Common myeloid progenitor, CD34-positive (primary cell): ENCODE measurements at regions of chr12 and their contacts with region 1.

Region 1: DNA sequence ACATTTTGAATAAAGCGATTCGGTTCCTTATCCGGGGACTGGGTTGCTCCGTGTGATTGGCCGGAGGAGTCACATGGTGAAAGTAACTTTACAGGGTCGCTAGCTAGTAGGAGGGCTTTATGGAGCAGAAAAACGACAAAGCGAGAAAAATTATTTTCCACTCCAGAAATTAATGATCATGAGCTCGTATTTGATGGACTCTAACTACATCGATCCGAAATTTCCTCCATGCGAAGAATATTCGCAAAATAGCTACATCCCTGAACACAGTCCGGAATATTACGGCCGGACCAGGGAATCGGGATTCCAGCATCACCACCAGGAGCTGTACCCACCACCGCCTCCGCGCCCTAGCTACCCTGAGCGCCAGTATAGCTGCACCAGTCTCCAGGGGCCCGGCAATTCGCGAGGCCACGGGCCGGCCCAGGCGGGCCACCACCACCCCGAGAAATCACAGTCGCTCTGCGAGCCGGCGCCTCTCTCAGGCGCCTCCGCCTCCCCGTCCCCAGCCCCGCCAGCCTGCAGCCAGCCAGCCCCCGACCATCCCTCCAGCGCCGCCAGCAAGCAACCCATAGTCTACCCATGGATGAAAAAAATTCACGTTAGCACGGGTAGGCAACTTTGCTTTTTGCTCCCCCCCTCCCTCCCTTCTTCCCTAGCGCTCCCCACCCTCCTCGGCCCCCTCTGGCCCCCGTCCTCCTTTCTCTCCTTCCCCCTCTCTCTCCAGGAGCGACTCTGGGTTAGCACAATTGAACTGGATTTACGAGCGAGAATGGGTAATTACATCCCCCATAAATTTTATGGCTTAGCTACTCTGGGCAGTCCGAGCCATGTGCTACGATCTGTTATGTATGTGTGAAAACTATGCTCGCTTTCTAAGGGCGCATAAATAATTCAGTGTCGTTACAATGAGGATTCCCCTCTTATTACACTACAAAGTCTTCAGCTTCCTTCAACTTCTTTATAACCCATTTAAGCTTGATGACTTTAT is at the start of gene HOXC4:
- DNase-seq: peak in 2 of 3 donors; percentile 34 to 69
- H3K4me3 ChIP-seq: peak within 1 kb of the TSS in 6 of 7 experiments; percentile 20 to 67 (median 54)
- H3K27ac ChIP-seq: no peak within 1 kb of the TSS
- H3K4me1 ChIP-seq: peaks cover 0 to 19% (median 9%) of the 10 kb centered on the region in 4 experiments
- H3K27me3 ChIP-seq: peaks cover 12 to 99% (median 73%) of the 10 kb centered on the region in 5 experiments

Region 2: GRCh38 chr12:54041097-54041690 is 12.9 kb before region 1 on chr12:
- CTCF ChIA-PET with region 1: interaction called, 11 read pairs
- POLR2A ChIA-PET with region 1: no interaction called
- DNase-seq: no peak
- H3K4me3 ChIP-seq: no peak overlapping the region
- H3K27ac ChIP-seq: no peak overlapping the region
- H3K4me1 ChIP-seq: no peaks in the 10 kb centered on the region
- H3K27me3 ChIP-seq: peaks cover 41 to 100% (median 63%) of the 10 kb centered on the region in 5 experiments

Region 3: DNA sequence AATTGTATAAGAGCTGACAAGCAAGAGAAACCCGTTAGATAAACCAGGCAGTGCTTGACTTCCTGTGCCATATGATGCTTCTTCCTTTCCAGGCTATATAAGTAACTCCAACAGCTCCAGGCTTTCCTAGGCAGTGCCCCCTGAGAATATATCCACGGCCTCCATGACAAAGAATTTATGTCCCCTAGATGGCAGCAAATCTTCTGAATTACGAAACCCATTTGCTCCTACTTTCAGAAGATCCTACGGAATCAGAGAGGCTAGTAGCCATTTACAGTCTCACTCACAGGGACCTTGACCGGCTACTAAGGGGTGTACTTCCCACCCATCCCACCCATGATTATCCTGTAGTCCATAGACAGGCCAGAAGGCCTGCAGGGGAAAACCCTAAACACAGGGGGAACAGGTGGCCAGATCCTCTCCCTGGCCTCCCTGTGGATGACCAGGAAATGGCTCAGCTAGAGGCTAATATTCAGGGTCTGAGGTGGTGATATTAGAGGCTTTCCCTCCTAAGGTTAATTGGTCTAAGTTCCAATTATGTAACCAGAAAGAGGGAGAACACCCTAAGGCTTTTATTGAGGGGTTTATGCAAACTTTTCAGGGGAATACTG is 671.3 kb after region 1 on chr12:
- CTCF ChIA-PET with region 1: no interaction called
- POLR2A ChIA-PET with region 1: no interaction called
- DNase-seq: peak; percentile 36 to 52 (median 50)
- H3K4me3 ChIP-seq: no peak overlapping the region
- H3K27ac ChIP-seq: no peak overlapping the region
- H3K4me1 ChIP-seq: no peaks in the 10 kb centered on the region
- H3K27me3 ChIP-seq: peaks cover 0 to 5% (median 0%) of the 10 kb centered on the region in 5 experiments